ENCODE measurements at regions of chr22 and their contacts with region 1.

Region 1: GRCh38 chr22:44395118-44396005 is 82.6 kb upstream of the SHISAL1 start:
- DNase-seq: no peak
- H3K4me3 ChIP-seq: no peak overlapping the region
- H3K27ac ChIP-seq: no peak overlapping the region
- H3K4me1 ChIP-seq: no peaks in the 10 kb centered on the region
- H3K27me3 ChIP-seq: no peaks in the 10 kb centered on the region
- CTCF ChIP-seq: no peak

Region 2: GRCh38 chr22:44449683-44450425 is 54.5 kb after region 1 on chr22:
- intact Hi-C with region 1: loop called (anchors 2 kb)
- DNase-seq: no peak
- H3K4me3 ChIP-seq: no peak overlapping the region
- H3K27ac ChIP-seq: no peak overlapping the region
- H3K4me1 ChIP-seq: no peaks in the 10 kb centered on the region
- H3K27me3 ChIP-seq: no peaks in the 10 kb centered on the region
- CTCF ChIP-seq: no peak

Measured in colonic mucosa (tissue), 4 donors.